B cell (primary cell): ENCODE measurements at regions of chr14 and their contacts with region 1.

Region 1: DNA sequence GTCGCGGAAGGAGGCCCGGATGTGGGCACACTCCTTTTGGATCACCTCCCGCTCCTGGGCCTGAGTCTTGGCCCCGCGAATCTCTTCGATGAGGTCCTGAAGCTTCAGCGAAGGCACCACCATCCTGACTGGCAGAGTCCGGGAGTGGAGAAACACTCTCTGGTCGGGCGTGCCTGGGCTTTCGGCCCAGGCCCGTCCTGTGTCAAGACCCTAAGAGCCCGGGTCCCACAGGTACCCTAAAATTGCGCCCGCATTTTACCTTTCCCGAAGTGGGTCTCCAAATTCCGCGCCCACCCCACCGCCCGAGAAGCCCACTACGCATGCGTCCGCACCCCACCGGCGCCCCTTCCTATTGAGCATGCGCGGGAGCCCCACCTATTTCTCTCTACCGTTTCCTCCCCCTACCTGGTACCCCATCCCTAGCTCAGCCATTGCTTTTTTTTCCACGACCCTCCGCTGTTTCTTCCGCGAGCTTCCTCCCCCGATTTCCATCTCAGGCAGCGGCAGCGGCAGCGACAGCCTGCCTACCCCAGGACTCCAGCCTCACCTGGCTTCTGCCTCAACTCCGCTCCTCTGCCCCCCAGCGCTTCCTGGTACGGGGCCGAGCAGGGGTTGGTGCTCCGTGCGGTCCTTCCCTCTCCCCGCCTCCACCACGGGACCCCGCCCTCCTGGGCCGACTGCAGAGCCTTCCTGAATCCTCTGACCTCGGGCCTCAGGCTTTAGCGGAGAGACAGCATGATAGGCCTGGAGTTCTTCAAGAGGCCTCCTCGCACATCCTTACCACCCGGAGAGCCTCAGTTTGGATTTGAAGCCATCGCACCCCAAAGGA is at the start of gene AP1G2:
- DNase-seq: peak; percentile 91
- ATAC-seq: peak; percentile 95
- H3K4me3 ChIP-seq: peak within 1 kb of the TSS; percentile 56 to 94 (median 80)
- H3K4me3 Mint-ChIP-seq: peak within 1 kb of the TSS; percentile 96
- H3K27ac ChIP-seq: peak within 1 kb of the TSS; percentile 71 to 72
- H3K27ac Mint-ChIP-seq: peak within 1 kb of the TSS; percentile 96
- H3K4me1 ChIP-seq: peaks cover 15 to 23% of the 10 kb centered on the region in 2 donors
- H3K4me1 Mint-ChIP-seq: peaks cover 36% of the 10 kb centered on the region
- H3K27me3 ChIP-seq: peaks cover 0 to 8% (median 3%) of the 10 kb centered on the region in 4 experiments
- H3K27me3 Mint-ChIP-seq: peaks cover 11% of the 10 kb centered on the region
- CTCF ChIP-seq: no peak
- total RNA-seq, gene AP1G2: 627 and 648 TPM in 2 replicates

Region 2: GRCh38 chr14:23286020-23286905 is 281.1 kb before region 1 on chr14 and contains the start of gene HOMEZ:
- CTCF ChIA-PET with region 1: no interaction called
- POLR2A ChIA-PET with region 1: no interaction called
- intact Hi-C with region 1: loop called (anchors 10 kb)
- DNase-seq: peak; percentile 97
- ATAC-seq: peak; percentile 97
- H3K4me3 ChIP-seq: peak within 1 kb of the TSS; percentile 56 to 90 (median 83)
- H3K4me3 Mint-ChIP-seq: peak within 1 kb of the TSS; percentile 98
- H3K27ac ChIP-seq: peak within 1 kb of the TSS; percentile 49 to 83
- H3K27ac Mint-ChIP-seq: peak within 1 kb of the TSS; percentile 93
- H3K4me1 ChIP-seq: peaks cover 13 to 17% of the 10 kb centered on the region in 2 donors
- H3K4me1 Mint-ChIP-seq: peaks cover 23% of the 10 kb centered on the region
- H3K27me3 ChIP-seq: no peaks in the 10 kb centered on the region
- H3K27me3 Mint-ChIP-seq: no peaks in the 10 kb centered on the region
- CTCF ChIP-seq: no peak
- total RNA-seq, gene HOMEZ: 15.5 TPM in 2 replicates

Region 3: DNA sequence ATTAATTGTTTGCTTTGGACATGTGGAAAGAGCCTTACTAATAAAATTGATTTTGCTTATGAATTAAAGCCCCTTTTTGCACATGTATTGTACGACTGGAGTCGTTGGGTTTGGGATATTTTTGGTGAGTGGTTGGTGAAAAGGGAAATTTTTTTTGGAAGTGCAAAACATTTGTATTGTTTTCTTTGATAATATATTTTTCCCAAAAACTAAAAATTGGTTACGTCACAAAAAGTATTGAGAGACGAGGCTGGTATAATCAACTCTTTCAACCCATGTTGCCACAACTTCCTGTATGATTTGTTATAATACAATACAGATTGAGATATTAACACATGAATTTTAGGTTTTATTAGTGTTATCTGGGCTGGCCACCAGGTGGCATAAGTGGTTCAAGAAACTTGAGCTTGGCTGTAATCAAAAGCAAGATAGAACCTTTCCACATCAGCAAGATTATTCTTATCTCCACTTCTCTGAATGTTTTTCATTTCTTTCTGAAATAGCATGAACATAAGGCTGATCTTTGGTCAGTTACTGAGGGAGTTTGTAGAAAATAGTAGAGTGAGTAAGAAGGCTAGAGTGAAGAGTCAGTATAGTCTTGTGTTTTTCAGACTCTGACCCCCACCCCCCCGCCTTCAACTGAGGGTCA is 89.2 kb before region 1 on chr14:
- CTCF ChIA-PET with region 1: interaction called, 335 read pairs
- POLR2A ChIA-PET with region 1: no interaction called
- intact Hi-C with region 1: loop called (anchors 1 kb)
- DNase-seq: peak; percentile 79
- ATAC-seq: peak; percentile 73
- H3K4me3 ChIP-seq: no peak overlapping the region
- H3K4me3 Mint-ChIP-seq: no peak overlapping the region
- H3K27ac ChIP-seq: peak overlapping the region in 1 of 2 donors; percentile 4
- H3K27ac Mint-ChIP-seq: no peak overlapping the region
- H3K4me1 ChIP-seq: no peaks in the 10 kb centered on the region
- H3K4me1 Mint-ChIP-seq: no peaks in the 10 kb centered on the region
- H3K27me3 ChIP-seq: no peaks in the 10 kb centered on the region
- H3K27me3 Mint-ChIP-seq: no peaks in the 10 kb centered on the region
- CTCF ChIP-seq: peak; percentile 81

Region 4: GRCh38 chr14:23555882-23556699 is 11.3 kb before region 1 on chr14 and contains the start of gene THTPA:
- CTCF ChIA-PET with region 1: interaction called, 61 read pairs
- POLR2A ChIA-PET with region 1: interaction called, 7 read pairs
- intact Hi-C with region 1: loop called (anchors 1 kb)
- DNase-seq: peak; percentile 96
- ATAC-seq: peak; percentile 78
- H3K4me3 ChIP-seq: peak within 1 kb of the TSS; percentile 17 to 97 (median 81)
- H3K4me3 Mint-ChIP-seq: peak within 1 kb of the TSS; percentile 98
- H3K27ac ChIP-seq: peak within 1 kb of the TSS; percentile 69 to 84
- H3K27ac Mint-ChIP-seq: peak within 1 kb of the TSS; percentile 99
- H3K4me1 ChIP-seq: peaks cover 19 to 36% of the 10 kb centered on the region in 2 donors
- H3K4me1 Mint-ChIP-seq: peaks cover 45% of the 10 kb centered on the region
- H3K27me3 ChIP-seq: no peaks in the 10 kb centered on the region
- H3K27me3 Mint-ChIP-seq: no peaks in the 10 kb centered on the region
- CTCF ChIP-seq: no peak
- total RNA-seq, gene THTPA: 21.4 and 21.5 TPM in 2 replicates

Region 5: GRCh38 chr14:23613242-23614070 is 46.0 kb after region 1 on chr14:
- CTCF ChIA-PET with region 1: no interaction called
- POLR2A ChIA-PET with region 1: no interaction called
- intact Hi-C with region 1: no loop called
- DNase-seq: no peak
- ATAC-seq: no peak
- H3K4me3 ChIP-seq: no peak overlapping the region
- H3K4me3 Mint-ChIP-seq: no peak overlapping the region
- H3K27ac ChIP-seq: no peak overlapping the region
- H3K27ac Mint-ChIP-seq: no peak overlapping the region
- H3K4me1 ChIP-seq: peaks cover 0 to 3% of the 10 kb centered on the region in 2 donors
- H3K4me1 Mint-ChIP-seq: no peaks in the 10 kb centered on the region
- H3K27me3 ChIP-seq: no peaks in the 10 kb centered on the region
- H3K27me3 Mint-ChIP-seq: peaks cover 26% of the 10 kb centered on the region
- CTCF ChIP-seq: no peak

Region 6: GRCh38 chr14:23776288-23776687 is 208.9 kb after region 1 on chr14:
- CTCF ChIA-PET with region 1: no interaction called
- POLR2A ChIA-PET with region 1: no interaction called
- intact Hi-C with region 1: no loop called
- DNase-seq: no peak
- ATAC-seq: no peak
- H3K4me3 ChIP-seq: no peak overlapping the region
- H3K4me3 Mint-ChIP-seq: no peak overlapping the region
- H3K27ac ChIP-seq: no peak overlapping the region
- H3K27ac Mint-ChIP-seq: no peak overlapping the region
- H3K4me1 ChIP-seq: no peaks in the 10 kb centered on the region
- H3K4me1 Mint-ChIP-seq: no peaks in the 10 kb centered on the region
- H3K27me3 ChIP-seq: peaks cover 0 to 9% (median 2%) of the 10 kb centered on the region in 4 experiments
- H3K27me3 Mint-ChIP-seq: peaks cover 27% of the 10 kb centered on the region
- CTCF ChIP-seq: no peak

Region 7: GRCh38 chr14:24093901-24094761 is 526.7 kb after region 1 on chr14 and contains the start of gene PCK2:
- CTCF ChIA-PET with region 1: no interaction called
- POLR2A ChIA-PET with region 1: no interaction called
- intact Hi-C with region 1: loop called (anchors 5 kb)
- DNase-seq: peak; percentile 81
- ATAC-seq: peak; percentile 66
- H3K4me3 ChIP-seq: peak within 1 kb of the TSS; percentile 62 to 97 (median 89)
- H3K4me3 Mint-ChIP-seq: peak within 1 kb of the TSS; percentile 95
- H3K27ac ChIP-seq: peak within 1 kb of the TSS; percentile 80 to 95
- H3K27ac Mint-ChIP-seq: peak within 1 kb of the TSS; percentile 92
- H3K4me1 ChIP-seq: peaks cover 5 to 35% of the 10 kb centered on the region in 2 donors
- H3K4me1 Mint-ChIP-seq: peaks cover 38% of the 10 kb centered on the region
- H3K27me3 ChIP-seq: no peaks in the 10 kb centered on the region
- H3K27me3 Mint-ChIP-seq: no peaks in the 10 kb centered on the region
- CTCF ChIP-seq: peak; percentile 28
- total RNA-seq, gene PCK2: 34.1 and 40.4 TPM in 2 replicates